ENCODE measurements at regions of chr13 and their contacts with region 1.

Region 1: DNA sequence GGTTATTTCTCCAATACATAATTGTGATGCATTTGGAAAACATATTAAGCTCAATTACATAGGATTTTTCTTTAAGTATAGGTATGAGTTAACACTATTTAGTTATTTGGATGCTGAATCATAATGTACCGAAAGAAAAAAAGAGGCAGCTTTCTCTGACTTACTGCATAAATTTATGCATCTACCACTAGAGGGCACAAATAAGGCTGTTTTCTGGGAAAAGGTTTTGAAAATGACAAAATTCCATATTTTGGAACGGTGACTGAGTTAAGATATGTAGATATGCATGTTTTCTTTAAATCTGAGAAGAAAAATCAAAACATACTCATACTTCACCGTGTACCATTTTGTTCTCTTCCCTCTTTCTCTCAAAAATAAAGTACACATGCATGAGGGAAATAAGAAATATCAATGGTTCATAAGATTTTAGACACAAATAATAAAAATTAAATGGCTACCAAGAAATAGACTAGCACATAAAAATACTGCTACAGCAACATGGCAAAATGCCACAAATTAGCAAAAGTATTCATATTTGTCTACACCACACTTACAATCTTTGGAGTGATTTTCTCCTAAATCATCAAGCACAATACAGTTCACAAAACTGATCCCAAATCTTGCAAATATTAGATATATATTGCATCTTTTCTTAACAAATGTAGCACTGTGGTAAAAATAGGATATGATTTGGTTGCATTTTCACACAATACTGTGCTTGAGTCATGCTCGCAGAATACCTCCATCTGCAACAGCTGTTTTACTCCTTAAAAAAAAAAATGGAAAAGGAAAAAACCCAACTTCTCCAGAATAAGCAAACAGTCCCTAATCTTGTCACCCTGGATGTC is 260.0 kb downstream of the FGF14 start:
- DNase-seq: no peak
- ATAC-seq: peak in 1 of 2 donors; percentile 68

Region 2: DNA sequence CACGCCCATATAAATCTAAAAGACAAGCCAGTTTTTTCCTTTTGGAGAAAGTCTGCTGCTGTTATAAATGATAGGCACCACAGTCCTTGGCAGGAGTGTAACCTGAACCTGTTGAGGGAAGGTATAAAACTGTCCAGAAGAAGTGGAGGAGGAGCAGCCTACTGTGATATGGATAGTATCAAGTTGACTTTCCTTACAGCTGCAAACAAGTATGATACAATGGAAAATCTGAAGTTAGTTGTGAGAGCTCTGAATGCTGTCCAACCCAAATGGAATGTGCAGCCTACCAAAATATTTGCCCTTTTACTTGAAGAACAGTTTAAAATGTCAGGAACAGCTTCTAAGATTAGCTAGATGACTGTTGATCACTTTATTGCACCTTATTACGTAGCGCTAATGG is 139.6 kb before region 1 on chr13:
- intact Hi-C with region 1: no loop called
- DNase-seq: no peak
- ATAC-seq: peak; percentile 30 to 74

Region 3: DNA sequence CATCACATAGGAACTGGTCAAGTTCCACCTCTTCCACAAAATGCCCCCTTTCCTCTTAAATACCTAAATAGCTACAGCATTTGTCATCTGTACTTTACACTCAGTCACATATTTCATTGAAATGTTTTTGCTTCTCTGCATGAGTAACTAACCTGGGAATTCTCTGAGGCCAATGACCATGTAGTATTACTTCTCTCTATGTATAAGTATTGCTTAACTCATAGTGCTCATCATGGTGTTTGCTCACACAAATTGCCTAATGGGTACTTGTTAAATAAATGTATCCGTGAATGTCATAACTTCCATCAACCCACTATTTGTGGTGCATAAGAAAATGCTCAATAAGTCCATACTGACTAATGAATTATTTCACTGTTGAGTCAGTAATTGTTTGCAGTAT is 144.5 kb after region 1 on chr13:
- intact Hi-C with region 1: no loop called
- DNase-seq: no peak
- ATAC-seq: peak in 1 of 2 donors; percentile 50

Region 4: DNA sequence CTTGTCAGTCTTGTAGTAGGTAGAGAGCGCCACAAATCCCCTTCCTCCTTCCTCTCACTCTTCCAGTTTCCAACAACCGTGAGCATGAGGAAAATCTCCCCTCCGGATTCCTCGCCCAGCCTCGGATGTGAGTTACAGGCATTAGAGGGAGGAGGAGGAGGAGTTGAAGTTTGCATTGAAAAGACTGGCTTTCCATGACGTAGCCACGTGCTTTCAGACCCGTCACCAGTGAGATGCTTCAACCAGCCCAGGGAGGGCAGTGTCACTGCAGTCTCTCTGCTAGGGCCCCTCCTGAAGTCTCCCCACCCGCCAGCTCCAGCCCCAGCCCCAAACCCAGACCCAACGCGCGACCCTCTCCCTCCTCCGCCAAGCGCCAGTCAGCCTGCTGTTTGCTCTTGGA is 260.4 kb after region 1 on chr13:
- intact Hi-C with region 1: loop called in 1 of 2 experiments (anchors 10 kb)
- DNase-seq: peak; percentile 47
- ATAC-seq: peak; percentile 75 to 78

Region 5: GRCh38 chr13:102460801-102461200 is 319.0 kb after region 1 on chr13:
- intact Hi-C with region 1: loop called in 1 of 2 experiments (anchors 5 kb)
- DNase-seq: no peak
- ATAC-seq: no peak